A549 (cell line): ENCODE measurements at regions of chr19 and their contacts with region 1.

Region 1: GRCh38 chr19:18173572-18174288 is at the start of gene IFI30:
- DNase-seq: peak; percentile 45 to 68
- ATAC-seq: peak; percentile 70 to 89
- H3K4me3 ChIP-seq: peak within 1 kb of the TSS; percentile 62
- H3K27ac ChIP-seq: peak within 1 kb of the TSS; percentile 52 to 77
- H3K4me1 ChIP-seq: peaks cover 4% of the 10 kb centered on the region; the same call in 1 of the 3 replicates
- CTCF ChIP-seq: no peak
- EP300 ChIP-seq: no peak
- POLR2A ChIP-seq: peak; percentile 73
- RAD21 ChIP-seq: no peak
- polyA plus RNA-seq, gene IFI30: 11.2 and 12.3 TPM in 2 replicates

Region 2: DNA sequence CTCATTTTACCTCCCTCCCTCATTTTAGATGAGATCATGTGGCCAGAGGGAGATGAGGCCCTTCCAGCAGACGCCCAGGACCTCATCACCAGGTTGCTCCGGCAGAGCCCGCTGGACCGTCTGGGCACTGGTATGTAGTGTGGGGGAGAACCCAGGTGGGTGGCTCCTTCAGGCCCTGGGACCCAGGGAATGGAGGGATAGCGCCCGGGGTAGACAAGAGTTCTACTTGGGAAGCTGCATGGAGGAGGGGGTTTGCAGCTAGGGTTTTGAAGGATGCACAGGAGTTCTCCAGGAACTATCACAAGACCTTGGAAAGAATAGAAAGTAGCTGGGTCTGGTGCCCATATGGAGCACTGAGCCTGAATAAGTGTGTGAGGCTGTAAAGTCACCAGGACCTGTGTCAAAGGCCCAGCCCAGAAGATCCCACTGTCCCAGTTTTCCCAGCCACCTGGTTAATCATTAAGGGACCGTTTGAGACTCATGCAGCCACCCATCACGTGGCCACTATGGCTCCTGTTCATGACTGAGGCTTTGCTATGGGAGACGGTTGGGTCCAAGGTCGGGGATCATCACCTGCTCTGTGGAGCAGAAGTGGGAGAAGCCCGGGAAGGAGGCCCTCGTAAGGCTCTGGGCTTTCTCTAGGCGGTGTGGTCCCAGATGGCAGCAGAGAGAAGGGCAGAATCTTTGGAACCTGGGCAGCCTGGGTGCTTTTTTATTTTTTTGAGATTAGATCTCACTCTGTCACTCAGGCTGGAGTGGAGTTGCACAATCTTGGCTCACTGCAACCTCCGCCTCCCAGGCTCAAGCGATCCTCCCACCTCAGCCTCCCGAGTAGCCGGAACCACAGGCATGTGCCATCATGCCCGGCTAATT is 37.8 kb before region 1 on chr19:
- CTCF ChIA-PET with region 1: no interaction called
- POLR2A ChIA-PET with region 1: no interaction called
- DNase-seq: peak in 1 of 2 experiments; percentile 41
- ATAC-seq: peak in 1 of 2 experiments; percentile 27; a peak in 1 of 6 replicates
- H3K4me3 ChIP-seq: no peak overlapping the region
- H3K27ac ChIP-seq: peak overlapping the region; percentile 27 to 37; a peak in 1 of 6 replicates
- H3K4me1 ChIP-seq: 0 out of 3 replicates have a peak, but pooled peaks cover 9% of the 10 kb centered on the region
- CTCF ChIP-seq: no peak
- EP300 ChIP-seq: no peak
- POLR2A ChIP-seq: no peak
- RAD21 ChIP-seq: no peak

Region 3: GRCh38 chr19:18160971-18161635 is 12.6 kb before region 1 on chr19:
- CTCF ChIA-PET with region 1: interaction called, 20 read pairs
- POLR2A ChIA-PET with region 1: no interaction called
- DNase-seq: peak; percentile 57 to 62
- ATAC-seq: peak; percentile 80 to 83
- H3K4me3 ChIP-seq: peak overlapping the region; percentile 42
- H3K27ac ChIP-seq: peak overlapping the region; percentile 91 to 96
- H3K4me1 ChIP-seq: peaks cover 22% of the 10 kb centered on the region
- CTCF ChIP-seq: peak; percentile 91
- EP300 ChIP-seq: no peak
- POLR2A ChIP-seq: peak; percentile 37
- RAD21 ChIP-seq: no peak; a peak in 1 of 5 replicates

Region 4: DNA sequence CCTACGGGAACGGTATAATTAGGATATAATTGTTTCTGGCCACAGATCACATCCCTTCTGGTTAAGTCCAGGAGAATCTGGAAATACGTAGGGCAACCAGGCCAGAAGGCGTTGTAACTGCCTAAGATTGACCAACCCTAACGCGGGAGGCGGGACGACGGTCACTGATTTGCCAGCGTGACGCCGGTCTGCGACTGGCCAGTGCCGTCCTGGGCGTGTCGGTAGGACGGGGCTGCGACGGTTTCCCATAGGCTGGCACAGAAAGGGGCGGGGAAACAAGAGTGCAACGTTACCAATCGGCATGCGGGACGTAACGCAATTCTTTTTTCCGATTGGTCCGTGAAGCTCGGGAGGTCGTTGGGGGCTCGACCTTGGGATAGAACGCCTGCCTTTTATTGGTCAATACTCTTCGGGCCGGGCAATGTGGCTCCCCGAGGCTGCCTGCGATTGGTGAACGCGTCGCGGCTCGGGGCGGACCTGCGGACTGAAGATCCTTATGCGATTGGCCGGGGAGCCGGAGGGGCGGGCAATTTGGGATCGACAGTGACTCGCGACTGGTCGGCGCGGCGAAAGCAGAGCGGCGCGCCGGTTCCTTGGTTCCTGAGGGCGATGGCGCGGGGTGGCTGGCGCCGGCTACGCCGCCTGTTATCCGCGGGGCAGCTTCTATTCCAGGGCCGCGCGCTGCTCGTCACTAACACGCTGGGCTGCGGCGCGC is 19.1 kb after region 1 on chr19 and contains the start of gene MPV17L2:
- CTCF ChIA-PET with region 1: interaction called, 10 read pairs
- POLR2A ChIA-PET with region 1: interaction called, 4 read pairs
- DNase-seq: peak; percentile 70 to 99
- ATAC-seq: peak; percentile 92 to 94
- H3K4me3 ChIP-seq: peak within 1 kb of the TSS; percentile 65
- H3K27ac ChIP-seq: peak within 1 kb of the TSS; percentile 62 to 87
- H3K4me1 ChIP-seq: peaks cover 14% of the 10 kb centered on the region; the same call in 2 of the 3 replicates
- CTCF ChIP-seq: no peak
- EP300 ChIP-seq: no peak
- POLR2A ChIP-seq: peak; percentile 61
- RAD21 ChIP-seq: no peak
- polyA plus RNA-seq, gene MPV17L2: 8.3 and 11.4 TPM in 2 replicates

Region 5: GRCh38 chr19:18208098-18208951 is 34.6 kb after region 1 on chr19:
- CTCF ChIA-PET with region 1: no interaction called
- POLR2A ChIA-PET with region 1: no interaction called
- DNase-seq: peak in 1 of 2 experiments; percentile 63
- ATAC-seq: no peak
- H3K4me3 ChIP-seq: no peak overlapping the region
- H3K27ac ChIP-seq: no peak overlapping the region; a peak in 1 of 6 replicates
- H3K4me1 ChIP-seq: peaks cover 5% of the 10 kb centered on the region; the same call in 2 of the 3 replicates
- CTCF ChIP-seq: peak; percentile 56
- EP300 ChIP-seq: no peak
- POLR2A ChIP-seq: no peak
- RAD21 ChIP-seq: peak; percentile 67 to 74

Region 6: GRCh38 chr19:18218600-18218999 is 44.9 kb after region 1 on chr19:
- CTCF ChIA-PET with region 1: no interaction called
- POLR2A ChIA-PET with region 1: no interaction called
- DNase-seq: no peak
- ATAC-seq: no peak
- H3K4me3 ChIP-seq: no peak overlapping the region
- H3K27ac ChIP-seq: no peak overlapping the region
- H3K4me1 ChIP-seq: peaks cover 4% of the 10 kb centered on the region; the same call in 1 of the 3 replicates
- CTCF ChIP-seq: no peak
- EP300 ChIP-seq: no peak
- POLR2A ChIP-seq: no peak
- RAD21 ChIP-seq: no peak

Region 7: DNA sequence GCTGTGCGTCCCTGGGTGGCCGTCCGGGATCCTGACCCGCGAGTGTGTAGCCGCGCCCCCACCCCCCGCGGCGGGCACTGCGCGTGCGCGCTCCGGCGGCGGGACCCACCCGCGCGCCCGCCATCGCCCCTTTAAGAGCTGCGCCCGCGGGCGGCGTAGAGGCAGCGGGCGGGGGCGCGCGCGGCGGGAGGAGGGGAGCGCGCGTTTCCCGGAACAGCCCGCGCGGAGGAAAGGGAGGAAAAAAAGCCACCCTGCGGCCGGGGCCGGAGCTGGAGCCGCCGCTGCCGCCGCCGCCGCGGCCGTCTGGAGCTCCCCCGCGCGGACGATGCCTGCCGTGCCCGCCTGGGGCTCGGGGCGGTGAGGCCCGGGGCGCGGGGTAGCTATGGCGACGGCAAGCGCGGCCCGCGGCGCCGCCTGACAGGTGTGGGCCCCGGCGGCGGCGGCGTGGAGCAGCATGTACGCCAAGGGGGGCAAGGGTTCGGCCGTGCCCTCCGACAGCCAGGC is 245.5 kb after region 1 on chr19 and contains the start of gene SSBP4:
- CTCF ChIA-PET with region 1: no interaction called
- POLR2A ChIA-PET with region 1: no interaction called
- DNase-seq: peak in 1 of 2 experiments; percentile 79
- ATAC-seq: peak in 1 of 2 experiments; percentile 25; a peak in 2 of 6 replicates
- H3K4me3 ChIP-seq: peak within 1 kb of the TSS; percentile 77
- H3K27ac ChIP-seq: peak within 1 kb of the TSS; percentile 96 to 100
- H3K4me1 ChIP-seq: peaks cover 52% of the 10 kb centered on the region
- CTCF ChIP-seq: peak; percentile 32; the same call in 2 of the 3 replicates
- EP300 ChIP-seq: no peak
- POLR2A ChIP-seq: no peak
- RAD21 ChIP-seq: no peak
- polyA plus RNA-seq, gene SSBP4: 5.4 and 6.9 TPM in 2 replicates